ENCODE measurements at regions of chr7 and their contacts with region 1.

Region 1: GRCh38 chr7:132858251-132858650 is 223.6 kb downstream of the CHCHD3 start:
- DNase-seq: no peak
- ATAC-seq: no peak
- H3K4me3 ChIP-seq: no peak overlapping the region
- H3K27ac ChIP-seq: no peak overlapping the region
- H3K4me1 ChIP-seq: peaks cover 0 to 6% (median 0%) of the 10 kb centered on the region in 12 donors
- H3K27me3 ChIP-seq: no peaks in the 10 kb centered on the region
- CTCF ChIP-seq: no peak
- POLR2A ChIP-seq: no peak

Region 2: GRCh38 chr7:132882714-132883428 is 24.6 kb after region 1 on chr7:
- intact Hi-C with region 1: loop called in 1 of 10 experiments (anchors 1 kb)
- DNase-seq: no peak
- ATAC-seq: no peak
- H3K4me3 ChIP-seq: no peak overlapping the region
- H3K27ac ChIP-seq: no peak overlapping the region
- H3K4me1 ChIP-seq: peaks cover 0 to 13% (median 0%) of the 10 kb centered on the region in 12 donors
- H3K27me3 ChIP-seq: no peaks in the 10 kb centered on the region
- CTCF ChIP-seq: no peak
- POLR2A ChIP-seq: no peak

Measured in heart left ventricle (tissue), 16 donors.